ENCODE measurements at regions of chr3 and their contacts with region 1.

Region 1: DNA sequence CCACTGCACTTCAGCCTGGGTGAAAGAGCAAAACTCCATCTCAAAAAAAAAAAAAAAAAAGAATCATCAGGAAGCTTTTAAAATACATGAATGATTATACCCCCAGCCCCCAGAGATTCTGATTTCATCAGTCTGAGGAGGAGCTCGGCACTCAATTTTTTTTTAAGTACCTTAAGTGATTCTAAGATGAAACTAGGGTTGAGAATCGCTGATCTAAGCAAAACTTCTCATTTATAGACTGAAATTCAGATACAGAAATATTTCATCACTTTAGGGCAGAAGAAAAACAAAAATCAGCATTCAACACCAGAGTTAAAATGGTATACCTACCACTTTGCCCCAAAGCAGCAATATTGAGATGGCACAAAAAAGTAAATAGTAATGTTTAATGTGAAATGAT is 24.7 kb downstream of the CPA3 start:
- DNase-seq: no peak
- ATAC-seq: no peak
- H3K4me3 ChIP-seq: no peak overlapping the region
- H3K27ac ChIP-seq: no peak overlapping the region
- H3K4me1 ChIP-seq: no peaks in the 10 kb centered on the region
- H3K27me3 ChIP-seq: no peaks in the 10 kb centered on the region
- CTCF ChIP-seq: no peak
- POLR2A ChIP-seq: no peak

Region 2: DNA sequence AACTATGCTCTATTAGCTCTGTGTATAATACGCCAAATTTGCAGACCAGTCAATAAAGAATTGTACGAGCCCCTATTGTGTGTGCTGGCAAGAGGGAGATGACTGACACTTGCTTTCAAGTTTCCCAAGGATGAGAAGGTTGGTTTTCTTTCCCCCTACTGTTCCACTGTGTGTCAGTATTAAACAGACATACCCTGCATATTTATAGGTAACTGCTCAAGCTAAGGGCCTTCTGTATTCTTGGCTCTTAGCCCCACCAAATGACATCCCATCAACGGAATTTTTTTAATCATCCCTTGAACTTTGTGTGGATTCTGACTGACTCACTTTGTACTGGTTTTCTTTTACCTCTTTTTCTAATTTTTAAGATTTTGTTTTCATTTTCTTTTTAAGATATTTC is 40.9 kb after region 1 on chr3:
- in situ Hi-C with region 1: no loop called
- intact Hi-C with region 1: loop called (anchors 5 kb)
- DNase-seq: no peak
- ATAC-seq: no peak
- H3K4me3 ChIP-seq: no peak overlapping the region
- H3K27ac ChIP-seq: no peak overlapping the region
- H3K4me1 ChIP-seq: peaks cover 3% of the 10 kb centered on the region in 2 donors
- H3K27me3 ChIP-seq: no peaks in the 10 kb centered on the region
- CTCF ChIP-seq: no peak
- POLR2A ChIP-seq: no peak

Region 3: DNA sequence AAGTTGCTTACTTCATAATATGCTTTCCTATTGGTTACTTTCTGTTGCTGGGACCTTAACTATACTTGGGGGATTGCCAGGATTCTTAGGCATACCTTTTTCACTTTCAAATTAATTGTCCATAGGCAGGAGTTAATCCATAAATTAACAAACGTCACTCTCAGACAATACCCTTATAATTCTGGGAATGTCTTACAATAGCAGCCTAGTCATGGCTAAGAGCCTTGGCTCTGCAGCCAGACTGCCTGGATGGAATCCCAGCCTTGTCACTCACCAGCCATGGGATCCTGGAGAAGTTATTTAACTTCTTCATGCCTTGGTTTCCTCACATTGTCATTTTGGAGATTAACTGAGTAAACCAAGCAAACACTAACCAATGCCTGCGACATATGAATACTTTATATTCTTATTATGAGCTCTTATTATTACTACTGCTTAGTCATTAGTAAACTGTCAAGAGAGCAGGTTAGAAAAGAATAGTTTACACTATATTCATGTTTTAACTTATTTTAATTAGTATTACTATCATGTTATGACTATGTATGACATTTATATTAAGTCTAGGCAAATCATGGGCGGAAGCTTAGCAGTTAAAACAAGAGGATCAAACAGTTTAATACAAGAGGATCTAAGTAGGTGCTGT is 130.5 kb after region 1 on chr3:
- in situ Hi-C with region 1: no loop called
- intact Hi-C with region 1: no loop called
- DNase-seq: peak in 1 of 2 donors; percentile 69
- ATAC-seq: peak in 1 of 2 donors; percentile 18
- H3K4me3 ChIP-seq: no peak overlapping the region
- H3K27ac ChIP-seq: peak overlapping the region; percentile 98 to 100 (median 100)
- H3K4me1 ChIP-seq: peaks cover 69 to 76% of the 10 kb centered on the region in 2 donors
- H3K27me3 ChIP-seq: no peaks in the 10 kb centered on the region
- CTCF ChIP-seq: no peak
- POLR2A ChIP-seq: no peak